WTC11 (cell line): ENCODE measurements at regions of chr9 and their contacts with region 1.

Region 1: GRCh38 chr9:136170006-136170901 is 34.7 kb downstream of the LHX3 start:
- DNase-seq: peak; percentile 79
- ATAC-seq: peak; percentile 69
- H3K4me3 Mint-ChIP-seq: no peak overlapping the region
- H3K27ac Mint-ChIP-seq: no peak overlapping the region
- H3K4me1 Mint-ChIP-seq: peaks cover 27% of the 10 kb centered on the region
- H3K27me3 Mint-ChIP-seq: peaks cover 3% of the 10 kb centered on the region; the same call in 1 of the 2 replicates
- CTCF ChIP-seq: peak; percentile 88

Region 2: GRCh38 chr9:136133191-136133958 is 36.9 kb before region 1 on chr9:
- CTCF ChIA-PET with region 1: interaction called, 24 read pairs
- POLR2A ChIA-PET with region 1: no interaction called
- DNase-seq: peak; percentile 79
- ATAC-seq: peak; percentile 84
- H3K4me3 Mint-ChIP-seq: peak overlapping the region; percentile 67
- H3K27ac Mint-ChIP-seq: no peak overlapping the region
- H3K4me1 Mint-ChIP-seq: peaks cover 14% of the 10 kb centered on the region
- H3K27me3 Mint-ChIP-seq: peaks cover 16% of the 10 kb centered on the region
- CTCF ChIP-seq: no peak

Region 3: DNA sequence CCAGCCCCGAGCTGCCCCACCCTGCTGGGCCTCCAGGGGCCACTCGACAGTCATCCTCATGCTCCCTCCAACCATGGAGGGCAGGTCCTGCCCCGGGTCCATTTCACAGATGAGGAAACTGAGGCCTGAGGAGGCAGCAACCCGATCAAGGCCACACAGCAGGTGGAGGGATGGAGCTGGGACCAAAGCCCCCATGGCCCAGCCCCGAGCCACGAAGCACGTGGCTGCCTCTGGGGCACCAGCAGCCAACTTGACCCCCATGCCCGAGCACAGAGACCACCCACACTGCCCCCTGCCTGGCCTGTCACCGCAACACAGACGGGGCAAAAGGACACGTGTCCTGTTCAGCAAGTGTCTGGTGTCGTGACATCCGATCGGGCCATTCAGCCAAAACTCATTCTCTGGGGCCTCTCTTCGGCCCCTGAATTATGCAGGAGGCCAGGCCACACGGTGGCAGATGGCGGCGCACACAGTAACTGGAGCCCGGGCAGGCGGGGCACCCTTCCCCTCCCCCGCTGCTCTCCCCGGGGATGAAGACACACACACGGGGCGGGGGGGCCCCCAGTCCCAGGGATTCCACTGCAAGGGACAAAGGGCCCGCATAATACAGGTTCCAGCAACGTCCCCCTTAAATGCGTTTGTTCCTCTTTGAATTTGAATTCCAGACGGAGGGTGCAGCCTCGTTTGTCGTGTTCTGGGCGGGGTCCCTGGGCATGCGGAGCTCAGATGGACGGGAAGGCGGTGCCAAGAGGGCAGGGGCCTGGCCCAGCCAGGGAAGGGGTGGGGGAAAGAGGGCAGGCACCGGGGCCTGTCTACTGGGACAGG is 22.2 kb before region 1 on chr9:
- CTCF ChIA-PET with region 1: interaction called, 22 read pairs
- POLR2A ChIA-PET with region 1: no interaction called
- DNase-seq: peak; percentile 29
- ATAC-seq: peak; percentile 18; the same call in 1 of the 2 replicates
- H3K4me3 Mint-ChIP-seq: no peak overlapping the region
- H3K27ac Mint-ChIP-seq: no peak overlapping the region
- H3K4me1 Mint-ChIP-seq: peaks cover 18% of the 10 kb centered on the region
- H3K27me3 Mint-ChIP-seq: peaks cover 5% of the 10 kb centered on the region
- CTCF ChIP-seq: no peak

Region 4: DNA sequence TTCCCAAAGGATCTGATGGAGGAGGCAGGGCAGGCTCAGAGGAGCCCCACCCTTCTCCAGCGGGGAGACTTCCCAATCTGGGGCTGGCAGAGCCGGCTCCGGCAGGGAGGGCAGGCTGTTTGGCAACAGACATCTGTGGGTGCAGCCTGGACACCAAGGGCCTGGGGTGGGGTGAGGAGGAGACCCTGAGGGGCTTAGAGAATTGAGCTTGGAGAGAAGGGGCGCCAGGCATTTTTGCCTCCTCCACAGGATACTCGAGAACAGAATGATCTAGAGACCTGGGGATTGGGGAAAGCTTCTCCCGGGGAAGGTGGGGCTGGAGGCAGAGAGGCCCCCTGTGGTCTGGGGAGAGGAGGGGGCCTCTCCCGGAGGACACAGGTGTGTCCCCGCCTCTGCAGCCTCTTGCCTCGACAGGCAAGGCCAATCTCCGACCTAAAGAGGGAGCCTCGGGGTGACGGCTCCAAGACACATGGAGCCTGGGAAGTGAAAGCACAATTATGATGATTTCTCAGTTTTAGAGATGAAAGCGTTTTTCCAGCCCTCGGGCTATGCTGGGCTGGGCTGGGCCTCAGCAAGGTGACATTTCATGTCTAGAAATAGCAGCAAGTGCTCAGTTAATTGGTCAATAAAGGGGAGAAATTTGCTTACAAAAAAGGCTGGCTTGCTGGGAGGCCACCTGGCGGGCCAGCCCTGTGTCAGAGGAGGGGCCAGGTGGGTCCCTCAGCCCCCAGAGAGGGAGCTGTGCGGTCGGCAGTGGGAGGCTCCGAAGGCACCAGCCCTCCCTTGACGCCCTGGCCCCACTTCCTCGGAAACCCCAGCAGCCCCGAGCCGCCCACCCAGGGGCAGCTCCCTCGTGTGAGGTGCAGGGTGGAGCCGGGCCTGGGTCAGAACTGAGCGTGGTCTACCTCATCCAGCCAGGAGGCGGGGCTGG is 26.5 kb after region 1 on chr9:
- CTCF ChIA-PET with region 1: interaction called, 24 read pairs
- POLR2A ChIA-PET with region 1: no interaction called
- DNase-seq: no peak
- ATAC-seq: 0 out of 2 replicates have a peak, but pooled peaks have one; percentile 5
- H3K4me3 Mint-ChIP-seq: peak overlapping the region; percentile 58
- H3K27ac Mint-ChIP-seq: no peak overlapping the region
- H3K4me1 Mint-ChIP-seq: peaks cover 22% of the 10 kb centered on the region
- H3K27me3 Mint-ChIP-seq: peaks cover 97% of the 10 kb centered on the region
- CTCF ChIP-seq: no peak

Region 5: DNA sequence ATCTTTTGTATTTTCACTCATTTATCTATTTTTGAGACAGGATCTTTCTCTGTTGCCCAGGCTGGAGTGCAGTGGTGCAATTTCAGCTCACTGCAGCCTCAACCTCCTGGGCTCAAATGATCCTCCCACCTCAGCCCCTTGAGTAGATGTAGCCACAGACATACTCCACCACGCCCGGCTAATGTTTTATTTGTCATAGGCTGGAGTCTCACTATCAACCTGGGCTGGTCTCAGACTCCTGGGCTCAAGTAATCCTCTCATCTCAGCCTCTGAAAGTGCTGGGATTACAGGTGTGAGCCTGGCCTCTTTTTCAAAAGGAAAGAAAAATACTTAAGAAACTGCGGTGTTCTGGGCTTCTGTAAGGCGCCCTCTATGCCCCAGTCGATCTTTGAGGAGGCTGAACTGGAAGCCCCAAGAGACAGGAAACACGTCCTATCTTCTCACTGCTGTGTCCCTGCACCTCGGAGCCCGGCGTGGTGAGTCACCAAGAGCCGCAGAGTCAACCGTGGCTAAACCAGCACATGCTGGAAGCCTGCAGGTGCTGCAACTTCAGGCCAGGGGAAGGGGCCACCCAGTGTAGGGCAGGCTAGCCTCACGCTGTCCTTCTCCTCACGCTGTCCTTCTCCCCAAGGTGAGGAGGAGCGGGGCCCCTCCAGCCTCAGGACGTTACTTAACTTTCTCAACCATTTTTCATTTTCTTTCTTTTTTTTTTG is 49.9 kb after region 1 on chr9:
- CTCF ChIA-PET with region 1: interaction called, 14 read pairs
- POLR2A ChIA-PET with region 1: no interaction called
- DNase-seq: no peak
- ATAC-seq: no peak
- H3K4me3 Mint-ChIP-seq: no peak overlapping the region
- H3K27ac Mint-ChIP-seq: 0 out of 2 replicates have a peak overlapping the region, but pooled peaks have one; percentile 45
- H3K4me1 Mint-ChIP-seq: peaks cover 2% of the 10 kb centered on the region; the same call in 1 of the 2 replicates
- H3K27me3 Mint-ChIP-seq: no peaks in the 10 kb centered on the region
- CTCF ChIP-seq: no peak

Region 6: GRCh38 chr9:136283291-136284235 is 113.3 kb after region 1 on chr9:
- CTCF ChIA-PET with region 1: interaction called, 16 read pairs
- POLR2A ChIA-PET with region 1: no interaction called
- DNase-seq: peak; percentile 89
- ATAC-seq: peak; percentile 96
- H3K4me3 Mint-ChIP-seq: no peak overlapping the region
- H3K27ac Mint-ChIP-seq: no peak overlapping the region
- H3K4me1 Mint-ChIP-seq: peaks cover 7% of the 10 kb centered on the region; the same call in 1 of the 2 replicates
- H3K27me3 Mint-ChIP-seq: no peaks in the 10 kb centered on the region
- CTCF ChIP-seq: peak; percentile 73

Region 7: DNA sequence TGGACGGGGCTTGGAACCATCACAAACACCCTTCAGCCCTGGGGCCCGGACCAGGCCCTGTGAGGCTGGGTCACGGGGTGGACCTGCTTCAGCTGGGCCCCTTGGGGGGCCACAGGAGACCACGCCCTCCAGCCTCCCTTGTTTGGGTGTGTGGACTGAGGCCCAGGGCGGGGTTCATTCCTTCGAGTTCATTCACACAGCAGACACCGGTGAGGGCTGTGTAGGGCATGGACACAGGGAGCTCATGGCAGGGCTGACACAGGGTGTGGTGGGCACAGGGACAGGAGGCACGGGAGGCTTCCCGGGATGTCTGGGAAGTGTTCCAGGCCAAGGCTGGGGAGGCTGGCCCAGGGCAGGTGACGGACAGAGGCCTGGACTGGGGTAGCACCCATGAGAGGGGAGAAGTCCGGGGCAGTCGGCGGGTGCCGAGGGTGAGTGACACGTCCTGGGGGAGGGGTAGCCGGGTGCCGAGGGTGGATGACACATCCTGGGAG is 184.4 kb after region 1 on chr9:
- CTCF ChIA-PET with region 1: no interaction called
- POLR2A ChIA-PET with region 1: no interaction called
- DNase-seq: no peak
- ATAC-seq: no peak
- H3K4me3 Mint-ChIP-seq: no peak overlapping the region
- H3K27ac Mint-ChIP-seq: no peak overlapping the region
- H3K4me1 Mint-ChIP-seq: no peaks in the 10 kb centered on the region
- H3K27me3 Mint-ChIP-seq: no peaks in the 10 kb centered on the region
- CTCF ChIP-seq: no peak